ENCODE measurements at regions of chr6 and their contacts with region 1.

Region 1: GRCh38 chr6:21593412-21593926 is at the start of gene SOX4:
- DNase-seq: peak; percentile 90 to 91
- H3K4me3 ChIP-seq: peak within 1 kb of the TSS; percentile 98
- H3K27ac ChIP-seq: peak within 1 kb of the TSS; percentile 73
- H3K4me1 ChIP-seq: peaks cover 15% of the 10 kb centered on the region
- H3K27me3 ChIP-seq: no peaks in the 10 kb centered on the region
- CTCF ChIP-seq: no peak
- total RNA-seq, gene SOX4: 32.8 and 36.1 TPM in 2 replicates

Region 2: DNA sequence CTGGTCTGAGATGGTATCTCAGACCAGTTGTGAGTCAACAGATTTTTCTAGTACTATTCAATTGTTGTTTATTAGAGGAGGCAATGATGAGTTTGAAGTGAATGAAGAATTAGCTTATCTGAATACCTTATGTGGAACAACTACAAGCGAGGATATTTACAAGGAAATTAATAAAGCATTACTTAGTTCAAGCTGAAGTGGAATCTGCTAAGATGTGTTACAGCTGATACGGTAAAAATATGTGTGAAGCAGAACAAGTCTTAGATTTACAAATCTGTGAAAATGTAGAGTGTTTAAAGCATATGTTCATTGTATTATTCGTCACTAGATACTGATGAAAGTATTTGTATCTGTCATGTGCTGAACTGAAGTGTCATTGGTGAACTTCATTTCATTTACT is 786.8 kb before region 1 on chr6:
- CTCF ChIA-PET with region 1: no interaction called
- POLR2A ChIA-PET with region 1: interaction called, 17 read pairs
- intact Hi-C with region 1: no loop called
- DNase-seq: no peak
- H3K4me3 ChIP-seq: no peak overlapping the region
- H3K27ac ChIP-seq: no peak overlapping the region
- H3K4me1 ChIP-seq: peaks cover 13% of the 10 kb centered on the region
- H3K27me3 ChIP-seq: no peaks in the 10 kb centered on the region
- CTCF ChIP-seq: no peak

Region 3: DNA sequence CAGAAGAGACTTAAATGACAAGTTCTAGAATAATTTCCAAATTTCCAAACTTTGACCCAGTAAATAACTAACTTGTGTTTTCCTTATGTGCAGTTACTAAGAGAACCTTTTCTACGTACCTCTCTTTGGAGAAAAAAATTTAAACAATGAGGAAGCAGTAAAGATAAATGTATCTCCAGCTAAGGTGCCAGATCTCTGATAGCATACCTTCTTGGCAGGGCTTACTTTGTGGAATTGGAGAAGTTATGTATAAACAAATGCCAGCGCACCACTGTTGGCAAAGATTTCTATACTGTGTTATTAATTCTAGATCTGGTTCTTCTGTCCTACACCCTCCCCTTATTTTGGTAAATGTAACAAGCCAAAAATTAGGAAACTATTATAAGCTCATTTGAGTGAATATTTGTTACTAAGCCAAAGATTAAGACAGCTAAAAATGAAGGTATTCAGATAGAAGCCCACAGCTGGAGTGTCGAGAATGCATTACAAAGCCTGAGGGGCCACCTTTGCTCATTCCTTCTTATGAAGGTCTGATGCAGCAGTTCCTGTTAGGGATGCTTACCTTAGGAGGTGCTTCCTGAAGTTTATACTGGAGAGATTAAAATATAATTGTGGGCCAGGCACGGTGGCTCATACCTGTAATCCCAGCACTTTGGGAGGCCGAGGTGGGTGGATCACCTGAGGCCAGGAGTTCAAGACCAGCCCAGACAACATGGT is 373.0 kb before region 1 on chr6:
- CTCF ChIA-PET with region 1: interaction called, 3 read pairs
- POLR2A ChIA-PET with region 1: interaction called, 10 read pairs
- intact Hi-C with region 1: loop called (anchors 1 kb)
- DNase-seq: peak; percentile 63 to 98
- H3K4me3 ChIP-seq: peak overlapping the region; percentile 28; the same call in 1 of the 2 replicates
- H3K27ac ChIP-seq: peak overlapping the region; percentile 95
- H3K4me1 ChIP-seq: peaks cover 30% of the 10 kb centered on the region
- H3K27me3 ChIP-seq: no peaks in the 10 kb centered on the region
- CTCF ChIP-seq: no peak

Region 4: GRCh38 chr6:21664314-21665109 is 71.0 kb after region 1 on chr6:
- CTCF ChIA-PET with region 1: no interaction called
- POLR2A ChIA-PET with region 1: no interaction called
- intact Hi-C with region 1: no loop called
- DNase-seq: peak in 1 of 2 experiments; percentile 34
- H3K4me3 ChIP-seq: peak overlapping the region; percentile 52
- H3K27ac ChIP-seq: no peak overlapping the region
- H3K4me1 ChIP-seq: 0 out of 2 replicates have a peak, but pooled peaks cover 10% of the 10 kb centered on the region
- H3K27me3 ChIP-seq: peaks cover 30% of the 10 kb centered on the region
- CTCF ChIP-seq: no peak

Region 5: DNA sequence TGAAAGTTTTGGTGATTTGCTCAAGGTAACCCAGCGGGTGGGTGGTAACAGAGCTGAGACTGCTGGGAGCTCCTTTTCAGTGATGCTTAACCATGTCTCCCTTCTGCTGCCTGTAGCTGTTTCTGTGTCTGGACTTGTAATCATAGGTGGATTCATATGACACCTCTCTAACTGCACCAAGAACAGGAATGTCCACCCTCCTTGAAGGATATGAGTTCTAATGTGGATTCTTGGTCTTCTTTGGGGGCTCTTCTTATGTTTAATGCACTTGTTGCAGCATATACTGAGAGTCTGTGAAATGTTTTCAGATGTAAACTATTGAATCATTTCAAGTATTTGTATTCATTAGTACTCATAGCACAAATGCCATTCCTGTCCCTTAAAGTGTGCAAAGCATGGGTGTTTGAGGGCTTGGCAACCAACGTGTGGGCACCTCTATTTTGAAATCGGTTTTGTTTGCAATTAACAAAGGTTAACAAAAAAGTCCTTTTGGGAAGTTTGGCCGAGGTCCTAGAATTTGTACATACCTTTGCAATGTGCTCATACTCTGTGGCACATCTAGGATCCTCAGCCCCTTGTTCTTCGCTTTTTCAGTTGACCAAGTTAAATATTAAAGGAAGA is 138.1 kb after region 1 on chr6:
- CTCF ChIA-PET with region 1: interaction called, 3 read pairs
- POLR2A ChIA-PET with region 1: interaction called, 6 read pairs
- intact Hi-C with region 1: loop called (anchors 1 kb)
- DNase-seq: peak; percentile 68 to 95
- H3K4me3 ChIP-seq: no peak overlapping the region
- H3K27ac ChIP-seq: peak overlapping the region; percentile 63
- H3K4me1 ChIP-seq: peaks cover 43% of the 10 kb centered on the region
- H3K27me3 ChIP-seq: no peaks in the 10 kb centered on the region
- CTCF ChIP-seq: no peak

Region 6: DNA sequence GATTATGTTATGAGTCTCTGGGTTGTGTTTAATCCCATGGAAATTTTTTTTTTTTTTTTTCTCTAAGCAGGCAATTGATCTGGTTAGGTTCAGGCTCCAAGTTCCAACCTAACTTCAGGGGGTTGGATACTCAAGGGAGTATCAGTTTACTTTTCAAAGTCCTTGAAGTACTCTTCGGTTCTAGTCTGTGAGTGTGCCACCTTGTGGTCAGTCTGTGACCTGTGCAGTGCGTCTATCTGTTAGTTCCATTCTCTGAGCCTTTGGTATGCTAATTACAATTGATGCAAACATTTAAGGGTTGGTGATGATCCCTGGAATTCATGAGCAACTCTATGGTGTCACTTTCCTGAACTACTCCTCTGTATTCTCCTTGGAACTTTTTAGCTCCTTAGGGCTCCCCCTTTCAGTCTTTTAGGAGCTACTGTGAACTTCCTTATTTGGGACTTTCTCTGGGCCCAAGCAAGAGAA is 342.1 kb after region 1 on chr6:
- CTCF ChIA-PET with region 1: no interaction called
- POLR2A ChIA-PET with region 1: no interaction called
- intact Hi-C with region 1: loop called (anchors 2 kb)
- DNase-seq: peak in 1 of 2 experiments; percentile 29
- H3K4me3 ChIP-seq: no peak overlapping the region
- H3K27ac ChIP-seq: no peak overlapping the region
- H3K4me1 ChIP-seq: no peaks in the 10 kb centered on the region
- H3K27me3 ChIP-seq: no peaks in the 10 kb centered on the region
- CTCF ChIP-seq: peak; percentile 74

Region 7: DNA sequence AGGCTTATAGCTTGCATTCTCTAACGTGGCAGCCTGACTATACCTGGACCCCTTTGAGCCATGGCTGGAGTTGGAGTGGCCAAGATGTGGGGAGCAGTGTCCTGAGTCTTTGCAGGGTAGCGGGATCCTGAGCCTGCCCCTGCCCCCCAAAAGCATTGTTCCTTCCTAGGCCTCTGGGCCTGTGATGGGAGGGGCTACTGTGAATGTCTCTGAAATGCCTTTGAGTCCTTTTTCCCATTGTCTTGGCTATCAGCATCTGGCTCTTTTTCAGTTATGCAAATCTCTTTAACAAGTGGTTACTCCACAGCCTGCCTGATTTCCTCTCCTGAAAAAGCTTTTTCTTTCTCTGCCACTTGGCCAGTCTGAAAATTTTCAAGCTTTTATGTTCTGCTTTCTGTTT is 720.3 kb after region 1 on chr6:
- CTCF ChIA-PET with region 1: no interaction called
- POLR2A ChIA-PET with region 1: interaction called, 16 read pairs
- intact Hi-C with region 1: no loop called
- DNase-seq: no peak
- H3K4me3 ChIP-seq: no peak overlapping the region
- H3K27ac ChIP-seq: no peak overlapping the region
- H3K4me1 ChIP-seq: no peaks in the 10 kb centered on the region
- H3K27me3 ChIP-seq: no peaks in the 10 kb centered on the region
- CTCF ChIP-seq: no peak

Region 8: GRCh38 chr6:23414051-23414446 is 1820.6 kb after region 1 on chr6:
- CTCF ChIA-PET with region 1: no interaction called
- POLR2A ChIA-PET with region 1: interaction called, 25 read pairs
- intact Hi-C with region 1: no loop called
- DNase-seq: no peak
- H3K4me3 ChIP-seq: no peak overlapping the region
- H3K27ac ChIP-seq: no peak overlapping the region
- H3K4me1 ChIP-seq: no peaks in the 10 kb centered on the region
- H3K27me3 ChIP-seq: no peaks in the 10 kb centered on the region
- CTCF ChIP-seq: peak; percentile 40; the same call in 1 of the 2 replicates

Measured in PC-9 (cell line).